ENCODE measurements at regions of chr11 and their contacts with region 1.

Region 1: GRCh38 chr11:65988791-65989592 is 13.0 kb downstream of the EIF1AD start:
- DNase-seq: peak; percentile 88
- H3K4me3 Mint-ChIP-seq: no peak overlapping the region
- H3K27ac Mint-ChIP-seq: peak overlapping the region; percentile 79
- H3K4me1 Mint-ChIP-seq: peaks cover 8% of the 10 kb centered on the region
- H3K27me3 Mint-ChIP-seq: no peaks in the 10 kb centered on the region

Region 2: GRCh38 chr11:65662799-65663638 is 326.0 kb before region 1 on chr11 and contains the start of gene RELA:
- intact Hi-C with region 1: no loop called
- DNase-seq: peak; percentile 89
- H3K4me3 Mint-ChIP-seq: peak within 1 kb of the TSS; percentile 89
- H3K27ac Mint-ChIP-seq: peak within 1 kb of the TSS; percentile 93
- H3K4me1 Mint-ChIP-seq: peaks cover 30% of the 10 kb centered on the region
- H3K27me3 Mint-ChIP-seq: no peaks in the 10 kb centered on the region
- total RNA-seq, gene RELA: 102 and 104 TPM in 2 replicates

Region 3: GRCh38 chr11:65711785-65712632 is 277.0 kb before region 1 on chr11 and contains the start of gene KAT5:
- intact Hi-C with region 1: loop called (anchors 1 kb)
- DNase-seq: peak; percentile 98
- H3K4me3 Mint-ChIP-seq: peak within 1 kb of the TSS; percentile 96
- H3K27ac Mint-ChIP-seq: peak within 1 kb of the TSS; percentile 98
- H3K4me1 Mint-ChIP-seq: peaks cover 29% of the 10 kb centered on the region
- H3K27me3 Mint-ChIP-seq: no peaks in the 10 kb centered on the region
- total RNA-seq, gene KAT5: 68.1 and 75.0 TPM in 2 replicates

Region 4: GRCh38 chr11:65817835-65818742 is 170.9 kb before region 1 on chr11:
- intact Hi-C with region 1: loop called (anchors 2 kb)
- DNase-seq: peak; percentile 90
- H3K4me3 Mint-ChIP-seq: peak overlapping the region; percentile 82
- H3K27ac Mint-ChIP-seq: peak overlapping the region; percentile 82
- H3K4me1 Mint-ChIP-seq: peaks cover 19% of the 10 kb centered on the region
- H3K27me3 Mint-ChIP-seq: peaks cover 9% of the 10 kb centered on the region

Region 5: GRCh38 chr11:65927904-65928397 is 61.0 kb before region 1 on chr11:
- intact Hi-C with region 1: loop called (anchors 2 kb)
- DNase-seq: peak; percentile 72
- H3K4me3 Mint-ChIP-seq: peak overlapping the region; percentile 48
- H3K27ac Mint-ChIP-seq: peak overlapping the region; percentile 92
- H3K4me1 Mint-ChIP-seq: peaks cover 40% of the 10 kb centered on the region
- H3K27me3 Mint-ChIP-seq: peaks cover under 1% of the 10 kb centered on the region

Region 6: GRCh38 chr11:66022401-66023185 is 33.6 kb after region 1 on chr11:
- intact Hi-C with region 1: loop called (anchors 1 kb)
- DNase-seq: peak; percentile 73
- H3K4me3 Mint-ChIP-seq: peak overlapping the region; percentile 12
- H3K27ac Mint-ChIP-seq: no peak overlapping the region
- H3K4me1 Mint-ChIP-seq: peaks cover 8% of the 10 kb centered on the region
- H3K27me3 Mint-ChIP-seq: peaks cover 8% of the 10 kb centered on the region